WTC11 (cell line): ENCODE measurements at regions of chr15 and their contacts with region 1.

Region 1: GRCh38 chr15:70488002-70488605 is 275.3 kb downstream of the UACA start:
- DNase-seq: peak; percentile 80
- ATAC-seq: peak; percentile 81
- H3K4me3 Mint-ChIP-seq: no peak overlapping the region
- H3K27ac Mint-ChIP-seq: no peak overlapping the region
- H3K4me1 Mint-ChIP-seq: no peaks in the 10 kb centered on the region
- H3K27me3 Mint-ChIP-seq: no peaks in the 10 kb centered on the region
- CTCF ChIP-seq: peak; percentile 94

Region 2: DNA sequence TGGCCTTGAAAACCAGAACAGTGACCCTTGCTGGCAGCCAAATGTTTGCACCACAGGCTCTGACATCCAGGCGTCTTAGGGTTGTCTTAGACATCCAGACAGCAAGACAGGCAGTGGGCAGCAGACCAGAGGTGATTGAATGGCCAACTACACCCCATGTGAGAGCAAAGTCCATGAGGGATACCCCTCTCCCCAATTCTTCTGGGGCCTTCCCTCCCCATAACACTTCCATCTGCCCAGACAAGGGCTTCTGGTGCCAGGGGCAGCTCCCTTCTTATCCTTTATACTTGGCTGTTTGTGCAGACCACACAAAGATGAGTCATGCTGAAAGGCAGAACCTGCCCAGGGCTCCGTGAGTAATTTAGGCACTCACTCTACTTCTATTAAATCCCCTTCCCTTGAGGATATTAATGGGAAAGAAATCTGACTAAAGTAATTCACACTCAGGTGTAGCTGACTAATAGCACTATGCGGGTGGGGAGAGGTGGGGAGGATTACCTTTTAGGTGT is 17.4 kb after region 1 on chr15:
- CTCF ChIA-PET with region 1: interaction called, 11 read pairs
- POLR2A ChIA-PET with region 1: no interaction called
- DNase-seq: no peak
- ATAC-seq: no peak; the same call in none of the 2 replicates
- H3K4me3 Mint-ChIP-seq: no peak overlapping the region
- H3K27ac Mint-ChIP-seq: no peak overlapping the region
- H3K4me1 Mint-ChIP-seq: peaks cover 41% of the 10 kb centered on the region
- H3K27me3 Mint-ChIP-seq: no peaks in the 10 kb centered on the region
- CTCF ChIP-seq: no peak

Region 3: DNA sequence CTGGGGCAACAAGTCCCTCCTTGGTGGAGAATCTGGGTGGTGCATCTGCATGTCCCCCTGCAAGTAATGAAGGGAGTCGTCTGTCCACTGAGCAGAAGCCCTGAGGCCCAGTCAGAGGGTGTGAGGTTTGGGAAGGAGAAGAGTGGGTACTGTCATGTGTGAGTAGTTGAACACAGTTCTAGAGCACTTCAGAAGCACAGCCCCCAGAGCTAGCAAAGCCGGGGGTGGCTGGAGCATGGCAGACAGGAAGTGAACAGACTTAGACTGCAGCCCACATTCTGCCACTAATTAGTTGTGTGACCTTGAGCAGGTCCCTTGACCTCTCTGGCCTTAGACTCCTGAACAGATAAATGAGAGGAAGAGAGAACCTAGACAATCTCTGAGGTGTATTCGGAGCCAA is 67.6 kb after region 1 on chr15:
- CTCF ChIA-PET with region 1: no interaction called
- POLR2A ChIA-PET with region 1: no interaction called
- DNase-seq: no peak
- ATAC-seq: no peak
- H3K4me3 Mint-ChIP-seq: no peak overlapping the region
- H3K27ac Mint-ChIP-seq: no peak overlapping the region
- H3K4me1 Mint-ChIP-seq: no peaks in the 10 kb centered on the region
- H3K27me3 Mint-ChIP-seq: peaks cover 5% of the 10 kb centered on the region; the same call in 1 of the 2 replicates
- CTCF ChIP-seq: no peak

Region 4: GRCh38 chr15:70584838-70585706 is 97.0 kb after region 1 on chr15:
- CTCF ChIA-PET with region 1: interaction called, 11 read pairs
- POLR2A ChIA-PET with region 1: no interaction called
- DNase-seq: peak; percentile 84
- ATAC-seq: peak; percentile 92
- H3K4me3 Mint-ChIP-seq: peak overlapping the region; percentile 69
- H3K27ac Mint-ChIP-seq: no peak overlapping the region
- H3K4me1 Mint-ChIP-seq: peaks cover 22% of the 10 kb centered on the region
- H3K27me3 Mint-ChIP-seq: peaks cover 26% of the 10 kb centered on the region
- CTCF ChIP-seq: peak; percentile 65; the same call in 1 of the 2 replicates

Region 5: GRCh38 chr15:70596354-70597055 is 108.4 kb after region 1 on chr15:
- CTCF ChIA-PET with region 1: no interaction called
- POLR2A ChIA-PET with region 1: no interaction called
- DNase-seq: no peak
- ATAC-seq: no peak
- H3K4me3 Mint-ChIP-seq: no peak overlapping the region
- H3K27ac Mint-ChIP-seq: no peak overlapping the region
- H3K4me1 Mint-ChIP-seq: peaks cover 3% of the 10 kb centered on the region; the same call in 1 of the 2 replicates
- H3K27me3 Mint-ChIP-seq: no peaks in the 10 kb centered on the region; the same call in none of the 2 replicates
- CTCF ChIP-seq: no peak